AG04450 (cell line): ENCODE measurements at regions of chr19 and their contacts with region 1.

Region 1: GRCh38 chr19:55437410-55438075 is 5.6 kb downstream of the SHISA7 start:
- DNase-seq: no peak
- H3K4me3 ChIP-seq: no peak overlapping the region
- H3K27ac ChIP-seq: no peak overlapping the region
- H3K27me3 ChIP-seq: peaks cover 33% of the 10 kb centered on the region
- CTCF ChIP-seq: no peak

Region 2: GRCh38 chr19:55418185-55418584 is 19.4 kb before region 1 on chr19:
- CTCF ChIA-PET with region 1: interaction called, 13 read pairs
- POLR2A ChIA-PET with region 1: no interaction called
- DNase-seq: peak; percentile 73
- H3K4me3 ChIP-seq: no peak overlapping the region
- H3K27ac ChIP-seq: no peak overlapping the region
- H3K27me3 ChIP-seq: peaks cover 5% of the 10 kb centered on the region
- CTCF ChIP-seq: peak; percentile 82

Region 3: GRCh38 chr19:55461259-55461973 is 23.9 kb after region 1 on chr19 and contains the start of gene ISOC2:
- CTCF ChIA-PET with region 1: no interaction called
- POLR2A ChIA-PET with region 1: no interaction called
- DNase-seq: peak; percentile 99
- H3K4me3 ChIP-seq: peak within 1 kb of the TSS; percentile 97
- H3K27ac ChIP-seq: peak within 1 kb of the TSS; percentile 90
- H3K27me3 ChIP-seq: peaks cover 3% of the 10 kb centered on the region
- CTCF ChIP-seq: no peak
- polyA plus RNA-seq, gene ISOC2: 45.1 and 72.2 TPM in 2 replicates

Region 4: DNA sequence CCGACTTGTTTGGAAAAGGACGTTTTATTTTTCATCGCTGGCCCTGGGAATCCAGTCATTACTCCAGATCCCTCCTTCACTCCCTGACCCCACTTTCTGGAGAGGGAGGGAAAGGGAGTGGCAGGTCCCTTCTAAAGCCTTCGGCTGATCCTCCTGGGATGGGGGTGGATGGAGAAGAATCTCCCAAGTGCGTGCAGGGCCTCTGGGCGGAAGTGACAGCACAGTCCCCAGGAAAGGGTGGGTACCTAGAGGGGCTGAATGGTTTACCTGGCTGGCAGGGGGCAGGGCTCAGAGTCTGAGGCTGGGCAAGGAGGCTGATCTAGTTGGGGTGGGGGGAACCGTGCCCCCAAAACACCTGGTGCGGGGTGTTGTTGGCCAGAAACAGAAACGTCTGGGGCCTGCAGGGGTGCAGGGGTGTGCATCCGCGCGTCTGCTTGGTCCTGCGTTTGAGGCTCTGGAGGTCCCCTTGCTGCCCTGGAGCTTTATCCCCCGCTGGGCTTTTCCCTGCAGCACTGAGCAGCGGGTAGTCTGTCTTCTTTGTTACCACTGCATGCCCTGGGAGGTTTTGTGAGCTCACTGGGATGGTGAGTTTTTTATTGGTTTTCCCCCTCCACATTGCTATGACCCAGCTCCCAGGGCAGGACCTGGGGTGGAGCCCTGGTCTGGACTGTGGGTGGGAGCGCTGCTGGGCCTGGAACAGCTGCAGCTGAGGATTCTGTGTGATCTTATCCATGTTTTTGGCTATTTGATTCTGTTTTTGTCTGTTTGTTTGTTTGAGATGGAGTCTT is 35.9 kb after region 1 on chr19:
- CTCF ChIA-PET with region 1: no interaction called
- POLR2A ChIA-PET with region 1: no interaction called
- DNase-seq: no peak
- H3K4me3 ChIP-seq: no peak overlapping the region
- H3K27ac ChIP-seq: no peak overlapping the region
- H3K27me3 ChIP-seq: no peaks in the 10 kb centered on the region
- CTCF ChIP-seq: no peak